Ascending aorta (tissue), 2 donors: ENCODE measurements at regions of chr17 and their contacts with region 1.

Region 1: DNA sequence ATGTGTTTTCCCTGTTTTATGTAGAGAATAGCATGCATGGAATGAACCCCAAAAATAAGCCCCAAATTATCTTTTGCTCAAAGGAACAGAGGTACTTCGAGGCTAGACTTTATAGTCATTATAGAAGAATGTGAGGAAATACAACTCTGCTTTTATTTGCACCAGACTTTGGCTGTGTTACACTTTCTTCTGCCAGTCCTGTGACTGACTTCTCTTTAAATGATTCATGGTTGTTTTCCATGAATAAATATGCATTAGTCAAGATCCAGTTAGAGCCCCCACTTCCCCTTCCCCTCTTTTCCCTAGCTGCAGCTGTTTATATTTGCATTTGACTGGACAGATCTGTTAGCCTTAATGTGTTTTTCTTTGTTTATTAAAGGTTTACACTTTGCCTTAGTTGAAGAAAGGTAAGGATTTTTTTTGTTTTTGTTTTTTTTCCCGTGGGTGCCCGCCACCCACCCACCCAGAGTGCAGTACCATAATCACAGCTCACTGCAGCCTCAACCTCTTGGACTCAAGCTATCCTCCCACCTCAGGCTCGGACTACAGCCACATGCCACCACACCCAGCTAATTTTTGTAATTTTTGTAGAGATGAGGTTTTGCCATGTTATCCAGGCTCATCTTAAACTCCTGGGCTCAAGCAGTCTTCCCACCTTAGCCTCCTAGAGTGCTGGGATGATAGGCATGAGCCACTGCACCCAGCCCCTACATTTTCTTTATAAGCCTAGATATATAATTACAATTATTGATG is 152.6 kb downstream of the CYB561 start:
- DNase-seq: no peak
- H3K4me3 ChIP-seq: peak overlapping the region in 1 of 2 donors; percentile 25
- H3K27ac ChIP-seq: peak overlapping the region; percentile 79 to 93
- H3K4me1 ChIP-seq: peaks cover 11 to 14% of the 10 kb centered on the region in 2 donors
- H3K27me3 ChIP-seq: no peaks in the 10 kb centered on the region
- CTCF ChIP-seq: no peak

Region 2: GRCh38 chr17:62860907-62861848 is 432.3 kb before region 1 on chr17:
- intact Hi-C with region 1: loop called (anchors 10 kb)
- DNase-seq: no peak
- H3K4me3 ChIP-seq: no peak overlapping the region
- H3K27ac ChIP-seq: no peak overlapping the region
- H3K4me1 ChIP-seq: peaks cover 3 to 6% of the 10 kb centered on the region in 2 donors
- H3K27me3 ChIP-seq: no peaks in the 10 kb centered on the region
- CTCF ChIP-seq: no peak

Region 3: GRCh38 chr17:63275318-63275970 is 18.1 kb before region 1 on chr17:
- intact Hi-C with region 1: loop called (anchors 2 kb)
- DNase-seq: no peak
- H3K4me3 ChIP-seq: no peak overlapping the region
- H3K27ac ChIP-seq: no peak overlapping the region
- H3K4me1 ChIP-seq: peaks cover 0 to 17% of the 10 kb centered on the region in 2 donors
- H3K27me3 ChIP-seq: no peaks in the 10 kb centered on the region
- CTCF ChIP-seq: no peak

Region 4: DNA sequence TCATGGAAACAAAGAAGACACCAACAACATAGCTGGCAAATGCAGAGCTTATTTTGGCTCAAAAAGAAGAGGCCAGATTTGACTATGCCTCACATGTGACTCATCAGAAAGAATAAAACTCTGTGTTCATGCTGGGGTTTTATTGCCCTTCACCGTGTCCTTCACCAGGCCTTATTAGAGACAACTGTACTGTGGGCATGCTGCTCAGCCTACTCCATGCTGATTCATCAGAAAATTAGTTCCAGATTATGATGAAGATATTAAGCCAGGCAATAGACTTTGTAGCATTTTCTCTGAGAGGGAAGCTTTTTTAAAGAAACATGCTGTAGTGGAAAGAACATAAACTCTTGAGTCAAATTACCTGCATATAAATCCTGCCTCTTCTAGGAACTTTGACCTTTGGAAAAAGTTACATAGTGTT is 62.8 kb after region 1 on chr17:
- intact Hi-C with region 1: loop called (anchors 5 kb)
- DNase-seq: peak in 1 of 2 donors; percentile 65
- H3K4me3 ChIP-seq: no peak overlapping the region
- H3K27ac ChIP-seq: peak overlapping the region; percentile 45 to 62
- H3K4me1 ChIP-seq: peaks cover 3 to 18% of the 10 kb centered on the region in 2 donors
- H3K27me3 ChIP-seq: no peaks in the 10 kb centered on the region
- CTCF ChIP-seq: no peak

Region 5: GRCh38 chr17:63395075-63395805 is 101.7 kb after region 1 on chr17:
- intact Hi-C with region 1: no loop called
- DNase-seq: no peak
- H3K4me3 ChIP-seq: no peak overlapping the region
- H3K27ac ChIP-seq: peak overlapping the region; percentile 46 to 67
- H3K4me1 ChIP-seq: peaks cover 0 to 13% of the 10 kb centered on the region in 2 donors
- H3K27me3 ChIP-seq: no peaks in the 10 kb centered on the region
- CTCF ChIP-seq: no peak

Region 6: GRCh38 chr17:63406689-63407330 is 113.3 kb after region 1 on chr17:
- intact Hi-C with region 1: loop called (anchors 5 kb)
- DNase-seq: peak in 1 of 2 donors; percentile 87
- H3K4me3 ChIP-seq: no peak overlapping the region
- H3K27ac ChIP-seq: peak overlapping the region; percentile 55 to 69
- H3K4me1 ChIP-seq: peaks cover 2 to 3% of the 10 kb centered on the region in 2 donors
- H3K27me3 ChIP-seq: no peaks in the 10 kb centered on the region
- CTCF ChIP-seq: peak; percentile 75 to 86 (median 78)